Naive thymus-derived CD4-positive, alpha-beta T cell (primary cell): ENCODE measurements at regions of chr6 and their contacts with region 1.

Region 1: DNA sequence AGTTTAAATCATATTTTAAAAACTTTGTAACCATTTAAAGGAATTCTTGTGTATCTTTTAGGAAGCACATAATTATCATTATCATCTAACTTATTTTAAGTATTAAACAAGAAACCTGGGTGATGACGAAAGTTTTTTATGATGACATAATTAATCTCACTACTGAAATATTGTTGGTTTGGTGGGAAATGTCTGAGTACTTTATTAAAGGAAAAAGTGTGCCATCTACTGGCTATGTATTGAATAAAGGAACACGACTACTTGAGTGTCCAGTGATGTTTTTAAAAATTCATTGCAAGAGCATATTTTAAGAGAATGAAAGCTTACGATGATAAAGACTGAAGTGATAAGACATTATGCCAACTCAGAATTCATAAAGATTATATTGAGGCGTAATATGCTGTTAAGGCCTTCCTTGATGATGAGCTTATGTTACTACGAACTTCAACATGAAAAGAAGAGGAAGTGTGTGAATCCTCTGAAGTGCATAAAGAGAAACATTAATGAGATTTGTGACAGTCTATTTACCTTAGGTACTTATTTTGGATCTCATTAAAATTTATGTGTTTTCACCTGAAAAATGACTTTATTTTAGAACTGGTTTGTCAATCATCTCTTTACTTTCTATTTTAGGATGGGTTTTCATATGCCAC is 12.0 kb upstream of the TRMT11 start:
- DNase-seq: peak in 6 of 9 donors; percentile 11 to 56 (median 43)
- ATAC-seq: peak; percentile 80
- H3K4me3 ChIP-seq: no peak overlapping the region
- H3K4me3 Mint-ChIP-seq: peak overlapping the region in 3 of 10 donors; percentile 24 to 54 (median 32)
- H3K27ac ChIP-seq: no peak overlapping the region
- H3K27ac Mint-ChIP-seq: peak overlapping the region in 7 of 9 donors; percentile 5 to 80 (median 46)
- H3K4me1 ChIP-seq: no peaks in the 10 kb centered on the region
- H3K4me1 Mint-ChIP-seq: peaks cover 3 to 13% (median 11%) of the 10 kb centered on the region in 7 donors
- H3K27me3 ChIP-seq: no peaks in the 10 kb centered on the region
- H3K27me3 Mint-ChIP-seq: no peaks in the 10 kb centered on the region

Region 2: GRCh38 chr6:125191916-125192609 is 782.3 kb before region 1 on chr6:
- CTCF ChIA-PET with region 1: no interaction called
- POLR2A ChIA-PET with region 1: no interaction called
- intact Hi-C with region 1: loop called in 1 of 2 experiments (anchors 1 kb)
- DNase-seq: peak in 8 of 9 donors; percentile 31 to 56 (median 46)
- ATAC-seq: peak; percentile 89
- H3K4me3 ChIP-seq: no peak overlapping the region
- H3K4me3 Mint-ChIP-seq: no peak overlapping the region
- H3K27ac ChIP-seq: no peak overlapping the region
- H3K27ac Mint-ChIP-seq: no peak overlapping the region
- H3K4me1 ChIP-seq: no peaks in the 10 kb centered on the region
- H3K4me1 Mint-ChIP-seq: peaks cover 0 to 4% (median 0%) of the 10 kb centered on the region in 7 donors
- H3K27me3 ChIP-seq: no peaks in the 10 kb centered on the region
- H3K27me3 Mint-ChIP-seq: peaks cover 0 to 6% (median 3%) of the 10 kb centered on the region in 5 donors

Region 3: DNA sequence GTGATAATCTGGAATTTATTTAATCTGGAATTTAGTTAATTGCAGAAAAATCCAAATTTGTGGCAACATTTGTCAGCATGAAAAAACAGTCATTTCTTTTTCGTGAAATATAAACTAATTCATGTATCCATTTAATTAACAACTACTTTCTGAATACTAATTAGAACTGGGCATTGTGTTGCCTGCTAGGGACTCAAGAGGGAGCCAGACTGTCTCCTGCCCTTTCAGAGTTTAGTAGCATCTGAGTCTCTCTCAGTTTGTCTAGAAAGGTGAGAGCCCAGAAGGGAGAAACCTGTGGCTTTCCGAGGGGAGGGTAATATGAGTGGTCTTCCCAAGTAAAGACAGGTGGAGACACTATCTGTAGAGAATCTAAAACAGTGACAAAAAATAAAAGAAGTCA is 461.7 kb before region 1 on chr6:
- CTCF ChIA-PET with region 1: no interaction called
- POLR2A ChIA-PET with region 1: no interaction called
- intact Hi-C with region 1: loop called in 1 of 2 experiments (anchors 2 kb)
- DNase-seq: peak in 1 of 9 donors; percentile 9
- ATAC-seq: no peak
- H3K4me3 ChIP-seq: no peak overlapping the region
- H3K4me3 Mint-ChIP-seq: no peak overlapping the region
- H3K27ac ChIP-seq: no peak overlapping the region
- H3K27ac Mint-ChIP-seq: no peak overlapping the region
- H3K4me1 ChIP-seq: no peaks in the 10 kb centered on the region
- H3K4me1 Mint-ChIP-seq: no peaks in the 10 kb centered on the region
- H3K27me3 ChIP-seq: no peaks in the 10 kb centered on the region
- H3K27me3 Mint-ChIP-seq: peaks cover 10 to 37% (median 19%) of the 10 kb centered on the region in 5 donors

Region 4: DNA sequence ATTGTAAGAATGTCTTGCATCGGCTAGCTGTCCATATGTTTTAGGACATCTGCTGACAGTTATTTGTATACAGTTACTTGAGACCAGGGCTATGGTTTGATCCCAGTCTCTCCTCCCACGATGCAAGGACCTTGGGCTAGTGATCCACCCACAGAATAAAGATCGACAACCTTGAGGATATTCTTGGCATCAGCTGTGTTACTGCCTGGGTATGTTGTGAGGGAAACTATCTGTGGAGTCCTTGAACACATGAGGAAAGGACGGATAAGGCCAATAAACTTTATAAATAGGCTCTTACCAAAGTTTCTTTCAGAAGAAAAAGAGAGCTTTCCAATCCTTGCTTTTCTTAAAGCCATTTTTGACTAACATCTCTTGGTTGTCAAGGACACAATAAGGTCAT is 295.7 kb before region 1 on chr6:
- CTCF ChIA-PET with region 1: no interaction called
- POLR2A ChIA-PET with region 1: no interaction called
- intact Hi-C with region 1: no loop called
- DNase-seq: no peak
- ATAC-seq: no peak
- H3K4me3 ChIP-seq: no peak overlapping the region
- H3K4me3 Mint-ChIP-seq: no peak overlapping the region
- H3K27ac ChIP-seq: no peak overlapping the region
- H3K27ac Mint-ChIP-seq: no peak overlapping the region
- H3K4me1 ChIP-seq: no peaks in the 10 kb centered on the region
- H3K4me1 Mint-ChIP-seq: peaks cover 0 to 13% (median 9%) of the 10 kb centered on the region in 7 donors
- H3K27me3 ChIP-seq: peaks cover 0 to 2% of the 10 kb centered on the region in 2 donors
- H3K27me3 Mint-ChIP-seq: peaks cover 26 to 52% (median 30%) of the 10 kb centered on the region in 5 donors

Region 5: DNA sequence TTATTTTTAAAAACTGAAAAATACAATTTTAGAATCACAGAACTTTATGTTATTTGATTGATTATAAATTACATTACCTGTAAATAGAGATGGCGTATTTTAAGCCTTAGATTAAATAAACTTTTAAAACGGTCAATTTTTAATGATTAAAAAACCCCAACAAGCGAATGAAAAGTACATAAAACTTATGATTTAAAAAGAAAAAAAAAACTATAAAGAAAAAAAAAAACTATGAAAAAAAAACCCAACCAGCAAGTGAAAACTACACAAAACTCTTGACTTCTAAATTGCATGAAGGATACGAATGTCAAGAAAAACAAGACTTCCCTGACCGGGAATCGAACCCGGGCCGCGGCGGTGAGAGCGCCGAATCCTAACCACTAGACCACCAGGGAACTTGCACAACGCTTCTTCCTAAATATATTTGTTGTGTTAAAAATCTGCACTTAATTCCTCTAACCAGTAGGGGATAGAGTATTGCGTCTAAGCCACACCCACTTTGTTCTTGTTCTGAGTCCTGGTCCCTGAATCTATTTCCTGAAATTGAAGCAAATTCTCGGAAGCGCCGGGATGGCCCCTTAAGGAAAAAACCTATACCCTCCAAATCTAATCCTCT is 194.3 kb before region 1 on chr6:
- CTCF ChIA-PET with region 1: interaction called, 6 read pairs
- POLR2A ChIA-PET with region 1: interaction called, 4 read pairs
- intact Hi-C with region 1: loop called (anchors 1 to 2 kb)
- DNase-seq: peak; percentile 83 to 96 (median 94)
- ATAC-seq: peak; percentile 89
- H3K4me3 ChIP-seq: peak overlapping the region; percentile 84
- H3K4me3 Mint-ChIP-seq: no peak overlapping the region
- H3K27ac ChIP-seq: peak overlapping the region; percentile 77
- H3K27ac Mint-ChIP-seq: no peak overlapping the region
- H3K4me1 ChIP-seq: peaks cover 4 to 19% of the 10 kb centered on the region in 2 donors
- H3K4me1 Mint-ChIP-seq: peaks cover 5 to 27% (median 22%) of the 10 kb centered on the region in 7 donors
- H3K27me3 ChIP-seq: no peaks in the 10 kb centered on the region
- H3K27me3 Mint-ChIP-seq: peaks cover 0 to 28% (median 0%) of the 10 kb centered on the region in 5 donors

Region 6: DNA sequence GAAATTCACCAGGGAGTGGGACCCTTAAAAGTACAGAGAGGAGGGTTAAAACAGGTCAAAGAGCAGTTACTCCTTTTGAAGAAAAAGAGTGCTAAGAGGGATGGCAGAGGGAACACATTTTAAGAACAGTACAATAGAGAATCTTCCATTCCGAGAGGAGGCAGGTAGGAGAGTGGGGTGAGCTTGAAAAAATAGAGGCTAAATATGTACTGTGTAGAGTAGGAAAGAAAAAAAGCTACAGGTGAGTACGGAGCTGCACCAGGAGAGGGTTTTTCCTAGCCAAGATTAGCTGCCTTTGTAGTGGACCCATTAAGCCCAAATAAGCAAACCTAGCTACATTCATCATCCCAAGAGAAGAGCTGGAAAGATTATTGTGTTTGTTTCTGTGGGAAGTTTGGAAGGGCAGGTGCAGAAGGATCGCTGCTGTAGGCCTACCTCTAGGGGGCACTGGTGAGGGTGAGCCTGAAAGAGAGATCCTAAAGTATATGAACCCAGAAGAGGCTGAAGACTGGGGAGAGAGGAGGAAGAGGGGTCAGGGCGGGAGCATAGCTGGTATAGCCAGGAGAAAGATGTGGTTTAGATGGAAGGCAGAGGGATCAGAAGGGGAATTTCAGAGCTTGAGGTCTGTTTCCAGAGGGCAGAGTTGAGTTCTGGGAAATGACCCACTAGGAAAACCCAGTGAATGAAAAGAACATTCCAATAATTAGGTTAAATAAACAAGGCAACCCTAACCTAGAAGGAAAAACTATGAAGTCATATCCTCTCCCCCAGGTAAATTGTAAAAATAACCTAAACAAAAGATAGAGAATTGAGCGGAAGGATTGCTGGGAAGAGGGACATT is 68.0 kb before region 1 on chr6:
- CTCF ChIA-PET with region 1: interaction called, 3 read pairs
- POLR2A ChIA-PET with region 1: no interaction called
- intact Hi-C with region 1: loop called in 1 of 2 experiments (anchors 1 kb)
- DNase-seq: peak in 7 of 9 donors; percentile 18 to 49 (median 29)
- ATAC-seq: peak; percentile 82
- H3K4me3 ChIP-seq: no peak overlapping the region
- H3K4me3 Mint-ChIP-seq: no peak overlapping the region
- H3K27ac ChIP-seq: no peak overlapping the region
- H3K27ac Mint-ChIP-seq: peak overlapping the region in 3 of 9 donors; percentile 17 to 60 (median 21)
- H3K4me1 ChIP-seq: no peaks in the 10 kb centered on the region
- H3K4me1 Mint-ChIP-seq: peaks cover 0 to 48% (median 0%) of the 10 kb centered on the region in 7 donors
- H3K27me3 ChIP-seq: no peaks in the 10 kb centered on the region
- H3K27me3 Mint-ChIP-seq: no peaks in the 10 kb centered on the region

Region 7: DNA sequence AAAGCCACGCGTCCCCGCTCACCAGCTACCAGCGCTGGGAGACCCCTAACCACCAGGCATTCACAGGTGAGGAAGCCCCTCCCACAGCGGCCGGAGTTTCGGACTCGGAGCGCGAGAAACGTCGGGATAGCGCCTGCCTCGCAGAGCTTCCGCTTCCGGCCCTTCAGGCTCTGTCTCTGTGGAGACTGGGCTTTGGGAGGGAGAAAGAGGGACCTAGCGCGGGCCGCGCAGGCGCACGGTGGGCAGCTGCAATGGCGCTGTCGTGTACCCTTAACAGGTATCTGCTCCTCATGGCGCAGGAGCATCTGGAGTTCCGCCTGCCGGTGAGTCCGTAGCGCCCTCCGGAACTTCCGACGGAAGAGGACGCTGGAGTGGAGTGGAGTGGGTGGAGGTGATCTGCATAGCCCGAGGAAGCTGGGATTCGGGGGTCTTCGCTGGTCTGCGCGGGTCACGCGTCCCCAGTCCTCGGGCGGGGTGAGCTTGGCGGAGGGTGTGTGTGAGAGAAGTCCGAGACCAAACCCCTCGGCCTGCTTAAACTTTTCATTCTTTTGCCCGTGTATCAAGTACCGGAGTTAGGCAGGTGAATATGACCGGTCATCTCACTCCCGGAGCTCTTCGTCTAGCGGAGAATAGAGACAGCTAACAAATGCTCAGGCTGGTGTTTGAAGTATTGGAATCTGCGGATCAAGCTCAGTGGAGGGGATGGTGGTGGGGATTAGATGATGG is 12.1 kb after region 1 on chr6 and contains the start of gene TRMT11:
- CTCF ChIA-PET with region 1: interaction called, 4 read pairs
- POLR2A ChIA-PET with region 1: interaction called, 17 read pairs
- intact Hi-C with region 1: no loop called
- DNase-seq: peak; percentile 58 to 80 (median 77)
- ATAC-seq: peak; percentile 95
- H3K4me3 ChIP-seq: peak within 1 kb of the TSS; percentile 89
- H3K4me3 Mint-ChIP-seq: peak within 1 kb of the TSS in 4 of 10 donors; percentile 12 to 40 (median 24)
- H3K27ac ChIP-seq: peak within 1 kb of the TSS; percentile 76
- H3K27ac Mint-ChIP-seq: no peak within 1 kb of the TSS
- H3K4me1 ChIP-seq: peaks cover 14 to 21% of the 10 kb centered on the region in 2 donors
- H3K4me1 Mint-ChIP-seq: peaks cover 0 to 19% (median 2%) of the 10 kb centered on the region in 7 donors
- H3K27me3 ChIP-seq: no peaks in the 10 kb centered on the region
- H3K27me3 Mint-ChIP-seq: no peaks in the 10 kb centered on the region
- total RNA-seq, gene TRMT11: 13.6 to 34.1 (median 20.1) TPM